Aorta (tissue), 5 donors: ENCODE measurements at regions of chr10 and their contacts with region 1.

Region 1: GRCh38 chr10:84424731-84425167 is 96.4 kb downstream of the CCSER2 start:
- DNase-seq: peak; percentile 92 to 93
- ATAC-seq: peak; percentile 97
- H3K4me3 ChIP-seq: peak overlapping the region; percentile 58 to 96
- H3K27ac ChIP-seq: peak overlapping the region; percentile 33 to 82
- H3K4me1 ChIP-seq: peaks cover 3 to 4% of the 10 kb centered on the region in 2 donors
- H3K27me3 ChIP-seq: no peaks in the 10 kb centered on the region

Region 2: GRCh38 chr10:84375011-84375410 is 49.7 kb before region 1 on chr10:
- intact Hi-C with region 1: loop called in 1 of 2 experiments (anchors 5 kb)
- DNase-seq: no peak
- ATAC-seq: no peak
- H3K4me3 ChIP-seq: no peak overlapping the region
- H3K27ac ChIP-seq: no peak overlapping the region
- H3K4me1 ChIP-seq: peaks cover 0 to 1% of the 10 kb centered on the region in 2 donors
- H3K27me3 ChIP-seq: no peaks in the 10 kb centered on the region

Region 3: GRCh38 chr10:84407396-84408180 is 17.2 kb before region 1 on chr10:
- intact Hi-C with region 1: loop called in 1 of 2 experiments (anchors 2 kb)
- DNase-seq: no peak
- ATAC-seq: no peak
- H3K4me3 ChIP-seq: no peak overlapping the region
- H3K27ac ChIP-seq: no peak overlapping the region
- H3K4me1 ChIP-seq: no peaks in the 10 kb centered on the region
- H3K27me3 ChIP-seq: no peaks in the 10 kb centered on the region